A549 (cell line): ENCODE measurements at regions of chr2 and their contacts with region 1.

Region 1: GRCh38 chr2:44291281-44292248 is 16.3 kb downstream of the SLC3A1 start:
- DNase-seq: peak; percentile 81 to 99
- ATAC-seq: peak; percentile 93
- H3K4me3 ChIP-seq: peak overlapping the region; percentile 16; the same call in 1 of the 3 replicates
- H3K27ac ChIP-seq: peak overlapping the region; percentile 92 to 96
- H3K4me1 ChIP-seq: peaks cover 69% of the 10 kb centered on the region
- CTCF ChIP-seq: peak; percentile 98
- EP300 ChIP-seq: peak; percentile 91 to 93
- POLR2A ChIP-seq: no peak
- RAD21 ChIP-seq: peak; percentile 99

Region 2: GRCh38 chr2:44087036-44087713 is 204.4 kb before region 1 on chr2:
- CTCF ChIA-PET with region 1: interaction called, 78 read pairs
- POLR2A ChIA-PET with region 1: no interaction called
- DNase-seq: peak; percentile 79 to 87
- ATAC-seq: peak; percentile 93 to 97
- H3K4me3 ChIP-seq: peak overlapping the region; percentile 36
- H3K27ac ChIP-seq: peak overlapping the region; percentile 70 to 86
- H3K4me1 ChIP-seq: peaks cover 14% of the 10 kb centered on the region
- CTCF ChIP-seq: peak; percentile 98
- EP300 ChIP-seq: no peak
- POLR2A ChIP-seq: no peak
- RAD21 ChIP-seq: peak; percentile 99

Region 3: DNA sequence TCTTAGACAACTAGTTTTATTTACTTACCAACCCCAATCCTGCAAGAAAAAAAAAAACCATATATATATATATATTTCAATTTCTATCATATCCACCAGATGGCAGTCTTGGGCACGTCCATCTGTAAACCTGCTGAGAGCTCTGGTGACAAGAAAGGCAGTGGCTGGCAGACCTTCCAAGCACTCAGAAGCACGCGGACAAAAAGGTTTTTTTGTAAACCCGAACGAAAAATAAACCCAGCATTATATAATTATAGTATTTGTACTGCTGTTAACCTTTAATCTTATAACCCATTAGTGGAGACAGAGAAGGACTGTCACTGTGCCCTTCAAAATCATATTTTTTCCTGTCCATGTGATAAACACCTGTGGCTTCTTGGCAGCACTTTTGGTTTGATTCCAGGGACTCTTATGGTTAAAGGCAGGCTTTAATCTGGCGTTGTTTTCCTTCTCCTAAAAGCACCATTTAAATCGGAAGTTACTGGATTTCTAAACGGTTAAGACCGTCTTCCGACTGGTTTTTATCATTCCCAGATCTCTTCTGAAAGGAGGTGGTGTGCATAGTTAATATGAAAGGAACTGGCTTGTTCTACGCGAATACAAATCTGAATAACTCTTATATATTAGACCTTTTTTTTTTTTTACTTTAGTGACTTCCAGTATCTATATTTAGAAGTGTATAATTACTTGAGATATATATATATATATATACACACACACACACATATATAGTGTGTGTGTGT is 47.3 kb before region 1 on chr2:
- CTCF ChIA-PET with region 1: interaction called, 548 read pairs
- POLR2A ChIA-PET with region 1: interaction called, 9 read pairs
- DNase-seq: peak; percentile 71 to 84
- ATAC-seq: peak; percentile 66 to 74; a peak in 4 of 6 replicates
- H3K4me3 ChIP-seq: peak overlapping the region; percentile 35
- H3K27ac ChIP-seq: peak overlapping the region; percentile 73 to 78
- H3K4me1 ChIP-seq: peaks cover 60% of the 10 kb centered on the region
- CTCF ChIP-seq: peak; percentile 94
- EP300 ChIP-seq: no peak
- POLR2A ChIP-seq: no peak
- RAD21 ChIP-seq: peak; percentile 81 to 94

Region 4: GRCh38 chr2:44275927-44276303 is 15.7 kb before region 1 on chr2:
- CTCF ChIA-PET with region 1: interaction called, 53 read pairs
- POLR2A ChIA-PET with region 1: no interaction called
- DNase-seq: peak in 1 of 2 experiments; percentile 54
- ATAC-seq: peak; percentile 51 to 78; a peak in 3 of 6 replicates
- H3K4me3 ChIP-seq: no peak overlapping the region
- H3K27ac ChIP-seq: peak overlapping the region; percentile 55 to 76
- H3K4me1 ChIP-seq: peaks cover 30% of the 10 kb centered on the region
- CTCF ChIP-seq: no peak
- EP300 ChIP-seq: no peak
- POLR2A ChIP-seq: no peak
- RAD21 ChIP-seq: no peak

Region 5: DNA sequence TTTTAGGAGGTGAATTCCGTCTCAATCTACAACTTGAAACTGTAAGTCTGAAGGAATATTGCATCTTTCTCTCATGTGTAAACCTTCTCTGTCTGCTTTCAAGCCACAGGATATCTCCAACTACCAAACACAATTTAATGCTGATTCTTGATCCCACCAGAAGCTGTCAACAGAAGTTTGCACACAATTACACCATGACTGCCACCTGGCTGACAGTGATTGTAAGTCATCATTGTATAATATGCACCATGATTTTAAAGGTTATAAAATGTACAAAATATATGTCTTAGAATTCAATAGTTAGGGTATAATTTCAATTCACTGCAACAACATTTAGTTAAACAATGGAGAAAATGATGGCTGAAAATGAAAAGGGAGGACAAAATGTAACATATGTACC is 51.3 kb after region 1 on chr2:
- CTCF ChIA-PET with region 1: interaction called, 11 read pairs
- POLR2A ChIA-PET with region 1: no interaction called
- DNase-seq: peak; percentile 28 to 66
- ATAC-seq: peak; percentile 62 to 81; a peak in 3 of 6 replicates
- H3K4me3 ChIP-seq: no peak overlapping the region
- H3K27ac ChIP-seq: no peak overlapping the region
- H3K4me1 ChIP-seq: no peaks in the 10 kb centered on the region
- CTCF ChIP-seq: peak; percentile 68
- EP300 ChIP-seq: no peak
- POLR2A ChIP-seq: no peak
- RAD21 ChIP-seq: peak; percentile 77 to 93

Region 6: GRCh38 chr2:44490726-44491125 is 199.2 kb after region 1 on chr2:
- CTCF ChIA-PET with region 1: no interaction called
- POLR2A ChIA-PET with region 1: no interaction called
- DNase-seq: no peak
- ATAC-seq: no peak
- H3K4me3 ChIP-seq: no peak overlapping the region
- H3K27ac ChIP-seq: no peak overlapping the region
- H3K4me1 ChIP-seq: no peaks in the 10 kb centered on the region
- CTCF ChIP-seq: no peak
- EP300 ChIP-seq: no peak
- POLR2A ChIP-seq: no peak
- RAD21 ChIP-seq: no peak

Region 7: GRCh38 chr2:44731505-44731904 is 439.9 kb after region 1 on chr2:
- CTCF ChIA-PET with region 1: no interaction called
- POLR2A ChIA-PET with region 1: no interaction called
- DNase-seq: no peak
- ATAC-seq: no peak
- H3K4me3 ChIP-seq: no peak overlapping the region
- H3K27ac ChIP-seq: no peak overlapping the region
- H3K4me1 ChIP-seq: peaks cover 15% of the 10 kb centered on the region
- CTCF ChIP-seq: no peak
- EP300 ChIP-seq: no peak
- POLR2A ChIP-seq: no peak
- RAD21 ChIP-seq: no peak